ENCODE measurements at regions of chr5 and their contacts with region 1.

Region 1: DNA sequence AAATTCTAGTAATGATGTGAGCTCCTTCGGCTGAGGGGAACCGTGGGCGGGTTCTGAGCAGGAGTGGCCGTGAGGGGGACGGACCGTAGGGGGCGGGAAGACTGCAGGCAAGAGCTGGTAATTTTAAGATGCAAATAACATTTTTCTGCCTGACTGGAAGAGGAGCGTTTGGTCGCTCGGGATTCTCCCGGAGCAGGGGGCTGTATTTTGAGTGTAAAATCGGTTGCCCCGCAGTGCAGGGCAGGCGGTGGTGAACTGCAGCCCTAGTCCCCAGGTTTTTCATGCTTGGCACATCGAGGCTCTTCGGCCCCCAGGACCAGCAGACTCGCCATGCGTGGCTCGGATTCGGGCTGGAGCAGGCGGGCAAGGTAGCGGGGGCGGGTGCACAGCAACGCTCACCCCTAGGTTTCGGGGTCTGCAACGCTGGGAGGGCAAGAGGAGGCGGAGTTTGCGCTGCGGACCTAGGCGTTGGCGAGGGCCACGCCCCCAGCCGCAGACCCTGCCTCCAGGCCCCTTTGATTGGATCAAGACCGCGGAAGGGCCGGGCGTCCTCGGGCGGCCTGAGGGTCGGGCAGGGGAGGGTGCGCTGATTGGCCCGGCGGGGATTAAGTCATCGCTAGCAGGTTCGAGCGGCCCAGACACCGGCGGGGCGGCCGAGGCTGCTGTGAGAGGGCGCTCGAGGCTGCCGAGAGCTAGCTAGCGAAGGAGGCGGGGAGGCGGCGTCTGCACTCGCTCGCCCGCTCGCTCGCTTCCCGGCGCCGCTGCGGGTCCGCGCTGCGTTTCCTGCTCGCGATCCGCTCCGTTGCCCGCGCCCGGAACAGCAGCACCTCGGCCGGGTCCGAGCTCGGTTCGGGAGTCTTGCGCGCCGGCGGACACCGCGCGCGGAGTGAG is at the start of gene ARHGAP26:
- DNase-seq: peak; percentile 96
- ATAC-seq: peak; percentile 94
- H3K4me3 ChIP-seq: peak within 1 kb of the TSS; percentile 78 to 90 (median 90)
- H3K4me3 Mint-ChIP-seq: peak within 1 kb of the TSS; percentile 97
- H3K27ac ChIP-seq: peak within 1 kb of the TSS; percentile 3 to 68
- H3K27ac Mint-ChIP-seq: peak within 1 kb of the TSS; percentile 85
- H3K4me1 ChIP-seq: peaks cover 11 to 12% of the 10 kb centered on the region in 2 donors
- H3K4me1 Mint-ChIP-seq: peaks cover 20% of the 10 kb centered on the region
- H3K27me3 ChIP-seq: no peaks in the 10 kb centered on the region
- H3K27me3 Mint-ChIP-seq: no peaks in the 10 kb centered on the region
- CTCF ChIP-seq: peak; percentile 9
- total RNA-seq, gene ARHGAP26: 22.5 and 27.8 TPM in 2 replicates

Region 2: DNA sequence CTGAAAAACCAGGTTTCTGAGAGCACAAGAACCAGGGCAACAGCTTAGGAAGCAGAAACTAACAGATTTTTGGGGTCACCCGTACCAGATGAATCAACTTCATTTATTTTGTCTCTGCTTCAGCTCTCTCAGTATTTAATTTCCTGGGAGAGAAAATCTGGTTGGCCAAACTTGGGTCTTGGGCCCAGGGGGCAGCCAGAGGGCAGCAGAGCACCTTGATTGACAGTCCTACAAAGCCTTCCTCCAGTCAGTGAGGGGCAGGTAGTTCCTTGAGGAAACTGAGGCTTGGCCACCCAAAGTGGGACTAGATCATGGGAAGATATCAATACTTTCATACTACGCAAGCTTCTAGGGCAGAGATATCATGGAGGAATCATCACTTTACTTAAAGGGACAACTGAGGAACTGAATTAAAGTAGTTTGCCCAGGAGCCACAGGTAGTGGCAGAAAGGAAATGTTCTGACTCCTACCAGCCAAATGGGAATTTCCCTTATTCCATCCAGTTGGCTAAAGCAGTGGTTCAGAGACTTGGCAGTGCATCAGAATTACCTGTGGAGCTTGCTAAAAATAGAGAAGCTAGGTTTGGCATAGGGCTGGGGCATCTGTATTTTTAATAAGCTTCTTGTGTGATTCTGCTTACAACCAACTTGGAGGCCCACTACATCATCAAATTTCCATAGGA is 21.3 kb before region 1 on chr5:
- CTCF ChIA-PET with region 1: interaction called, 37 read pairs
- POLR2A ChIA-PET with region 1: no interaction called
- intact Hi-C with region 1: no loop called
- DNase-seq: peak; percentile 74
- ATAC-seq: peak; percentile 68
- H3K4me3 ChIP-seq: no peak overlapping the region
- H3K4me3 Mint-ChIP-seq: no peak overlapping the region
- H3K27ac ChIP-seq: no peak overlapping the region
- H3K27ac Mint-ChIP-seq: no peak overlapping the region
- H3K4me1 ChIP-seq: no peaks in the 10 kb centered on the region
- H3K4me1 Mint-ChIP-seq: no peaks in the 10 kb centered on the region
- H3K27me3 ChIP-seq: no peaks in the 10 kb centered on the region
- H3K27me3 Mint-ChIP-seq: peaks cover 13% of the 10 kb centered on the region
- CTCF ChIP-seq: peak; percentile 80

Region 3: DNA sequence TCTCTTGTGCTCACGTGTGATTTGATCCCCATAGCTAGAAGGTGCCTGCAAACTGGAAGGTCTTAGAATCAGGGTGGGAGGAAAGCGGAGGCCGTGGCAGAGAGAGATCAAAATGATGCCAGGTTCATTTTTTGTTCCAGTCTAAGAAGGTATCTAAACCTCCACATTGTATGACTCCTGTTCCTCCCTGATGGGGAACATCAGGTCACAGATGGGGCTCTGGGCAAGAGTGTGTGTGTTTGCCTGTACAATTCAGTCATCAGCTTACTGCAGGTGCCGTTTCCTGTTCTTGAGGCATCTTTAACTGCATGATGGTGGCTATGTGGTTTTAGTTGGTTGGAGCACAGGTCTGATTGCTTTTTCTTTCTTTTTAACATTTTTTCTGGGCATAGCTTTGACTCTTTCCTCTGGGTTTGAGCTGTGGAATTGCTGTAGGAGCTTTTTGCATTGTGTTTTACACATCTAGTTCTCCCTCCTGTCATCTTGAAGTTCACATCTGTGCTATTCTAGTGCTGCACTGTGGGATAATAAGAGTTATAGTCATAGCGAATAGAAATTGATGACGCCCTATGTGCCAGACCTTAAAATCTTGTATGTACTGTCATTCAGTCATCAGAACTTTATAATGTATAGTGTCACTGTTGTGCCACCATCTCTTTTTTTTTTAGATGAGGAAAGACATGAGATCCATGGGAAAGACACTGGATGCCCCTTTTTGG is 30.9 kb after region 1 on chr5:
- CTCF ChIA-PET with region 1: interaction called, 7 read pairs
- POLR2A ChIA-PET with region 1: no interaction called
- intact Hi-C with region 1: loop called (anchors 2 kb)
- DNase-seq: peak; percentile 75
- ATAC-seq: peak; percentile 88
- H3K4me3 ChIP-seq: peak overlapping the region in 3 of 5 experiments; percentile 0 to 34 (median 28)
- H3K4me3 Mint-ChIP-seq: peak overlapping the region; percentile 37
- H3K27ac ChIP-seq: peak overlapping the region; percentile 39 to 55
- H3K27ac Mint-ChIP-seq: peak overlapping the region; percentile 38
- H3K4me1 ChIP-seq: peaks cover 53 to 58% of the 10 kb centered on the region in 2 donors
- H3K4me1 Mint-ChIP-seq: peaks cover 62% of the 10 kb centered on the region
- H3K27me3 ChIP-seq: no peaks in the 10 kb centered on the region
- H3K27me3 Mint-ChIP-seq: no peaks in the 10 kb centered on the region
- CTCF ChIP-seq: no peak

Region 4: DNA sequence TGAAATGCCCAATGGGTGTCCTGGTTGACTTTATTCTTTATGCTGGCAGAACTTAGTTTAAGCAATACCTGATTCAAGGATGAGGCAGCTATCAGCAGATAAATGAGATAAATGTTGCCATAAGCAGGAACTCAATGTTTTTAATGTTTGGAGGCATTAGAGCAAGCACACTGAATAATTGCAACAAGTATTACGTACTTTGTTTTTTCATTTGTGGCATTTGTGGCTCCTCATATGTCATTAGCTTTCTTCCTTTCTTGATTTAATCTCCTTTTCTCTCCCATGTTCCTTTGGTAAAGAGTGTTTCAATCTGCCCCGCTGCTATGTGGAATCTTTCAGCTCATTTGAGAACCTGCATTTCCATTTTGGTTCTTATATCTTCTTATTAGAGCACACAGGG is 639.9 kb after region 1 on chr5:
- CTCF ChIA-PET with region 1: no interaction called
- POLR2A ChIA-PET with region 1: no interaction called
- intact Hi-C with region 1: no loop called
- DNase-seq: no peak
- ATAC-seq: no peak
- H3K4me3 ChIP-seq: no peak overlapping the region
- H3K4me3 Mint-ChIP-seq: no peak overlapping the region
- H3K27ac ChIP-seq: no peak overlapping the region
- H3K27ac Mint-ChIP-seq: no peak overlapping the region
- H3K4me1 ChIP-seq: peaks cover 13 to 16% of the 10 kb centered on the region in 2 donors
- H3K4me1 Mint-ChIP-seq: peaks cover 26% of the 10 kb centered on the region
- H3K27me3 ChIP-seq: no peaks in the 10 kb centered on the region
- H3K27me3 Mint-ChIP-seq: no peaks in the 10 kb centered on the region
- CTCF ChIP-seq: no peak

Region 5: GRCh38 chr5:144170276-144171024 is 1400.5 kb after region 1 on chr5 and contains the starts of genes KCTD16 and YIPF5:
- CTCF ChIA-PET with region 1: no interaction called
- POLR2A ChIA-PET with region 1: no interaction called
- intact Hi-C with region 1: loop called (anchors 1 kb)
- DNase-seq: peak; percentile 98
- ATAC-seq: peak; percentile 98
- H3K4me3 ChIP-seq: peak within 1 kb of the TSS; percentile 69 to 92 (median 71)
- H3K4me3 Mint-ChIP-seq: peak within 1 kb of the TSS; percentile 93
- H3K27ac ChIP-seq: peak within 1 kb of the TSS; percentile 61 to 85
- H3K27ac Mint-ChIP-seq: peak within 1 kb of the TSS; percentile 97
- H3K4me1 ChIP-seq: peaks cover 13 to 15% of the 10 kb centered on the region in 2 donors
- H3K4me1 Mint-ChIP-seq: peaks cover 30% of the 10 kb centered on the region
- H3K27me3 ChIP-seq: no peaks in the 10 kb centered on the region
- H3K27me3 Mint-ChIP-seq: peaks cover 6% of the 10 kb centered on the region
- CTCF ChIP-seq: no peak
- total RNA-seq, gene KCTD16: 0.17 TPM in 1 of 2 replicates, not detected in the other
- total RNA-seq, gene YIPF5: 24.0 and 24.3 TPM in 2 replicates